ENCODE measurements at regions of chr14 and their contacts with region 1.

Region 1: GRCh38 chr14:57221931-57222330 is 46.8 kb downstream of the EXOC5 start:
- DNase-seq: no peak

Region 2: DNA sequence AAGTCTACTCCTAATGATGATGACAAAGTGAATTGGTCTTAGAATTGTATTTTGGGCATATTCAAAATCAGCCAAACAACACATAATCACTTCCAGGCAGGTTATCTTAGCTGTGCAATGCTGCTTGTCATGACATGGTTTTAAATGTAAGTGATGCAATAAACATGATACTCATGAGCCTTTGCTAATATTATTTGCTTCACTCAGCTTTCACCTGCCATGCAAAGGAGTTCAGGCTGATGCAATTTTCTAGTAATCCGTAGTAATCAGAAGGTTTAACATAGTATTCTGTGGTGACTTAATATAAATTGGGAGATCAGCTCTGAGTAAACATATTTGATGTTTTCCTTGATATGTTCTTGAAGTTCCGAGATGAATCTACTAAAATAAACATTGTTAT is 613.2 kb before region 1 on chr14:
- intact Hi-C with region 1: loop called in 1 of 2 experiments (anchors 5 kb)
- DNase-seq: no peak

Region 3: DNA sequence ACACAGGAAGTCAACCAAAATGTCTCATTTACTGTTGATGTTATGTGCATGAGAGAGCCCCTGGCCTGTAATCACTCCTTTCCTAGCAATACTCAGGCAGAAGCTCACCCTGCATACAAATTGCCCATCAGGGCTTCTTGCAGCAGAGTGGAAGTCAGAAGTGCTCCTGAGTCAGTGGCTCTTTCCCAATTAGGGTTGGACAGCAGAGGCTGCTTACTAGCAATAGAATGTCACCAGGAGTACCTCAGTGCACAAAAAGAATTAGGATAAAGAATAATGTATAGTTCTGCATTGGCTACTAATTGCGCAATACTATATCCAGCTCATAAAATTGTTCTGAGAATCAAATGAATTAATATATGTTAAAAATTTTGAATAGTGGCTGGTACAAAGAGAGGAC is 482.8 kb after region 1 on chr14:
- intact Hi-C with region 1: no loop called
- DNase-seq: no peak